Caco-2 (cell line): ENCODE measurements at regions of chr4 and their contacts with region 1.

Region 1: DNA sequence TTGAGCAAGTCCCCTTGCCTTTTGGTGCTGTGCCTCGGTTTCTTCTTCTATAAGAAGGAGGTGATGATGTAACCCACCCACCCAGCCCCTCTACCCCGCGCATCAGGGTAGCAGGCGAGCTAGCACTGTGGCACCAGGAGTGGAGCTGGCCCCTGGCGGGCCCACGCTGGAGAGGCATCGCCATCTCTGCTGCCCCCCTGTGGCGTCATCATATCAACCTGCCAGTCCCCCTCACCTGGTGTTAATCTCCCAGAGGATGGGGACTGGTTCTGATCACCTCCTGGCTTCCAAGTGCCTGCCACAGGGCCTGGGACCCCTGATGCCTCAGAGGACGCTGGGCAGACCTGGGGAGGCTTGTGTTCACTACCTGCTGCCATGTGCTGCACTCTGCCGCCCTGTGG is 6.3 kb upstream of the SORCS2 start:
- DNase-seq: peak in 1 of 2 experiments; percentile 62
- H3K4me3 ChIP-seq: no peak overlapping the region
- H3K4me3 Mint-ChIP-seq: no peak overlapping the region
- H3K27ac Mint-ChIP-seq: no peak overlapping the region
- H3K4me1 ChIP-seq: no peaks in the 10 kb centered on the region
- H3K4me1 Mint-ChIP-seq: no peaks in the 10 kb centered on the region
- H3K27me3 ChIP-seq: no peaks in the 10 kb centered on the region
- H3K27me3 Mint-ChIP-seq: peaks cover 8% of the 10 kb centered on the region
- CTCF ChIP-seq: peak; percentile 38 to 58

Region 2: GRCh38 chr4:7151668-7152227 is 34.3 kb before region 1 on chr4:
- CTCF ChIA-PET with region 1: interaction called, 8 read pairs
- POLR2A ChIA-PET with region 1: no interaction called
- intact Hi-C with region 1: loop called (anchors 5 kb)
- DNase-seq: no peak
- H3K4me3 ChIP-seq: no peak overlapping the region
- H3K4me3 Mint-ChIP-seq: no peak overlapping the region
- H3K27ac Mint-ChIP-seq: no peak overlapping the region
- H3K4me1 ChIP-seq: no peaks in the 10 kb centered on the region
- H3K4me1 Mint-ChIP-seq: no peaks in the 10 kb centered on the region
- H3K27me3 ChIP-seq: no peaks in the 10 kb centered on the region
- H3K27me3 Mint-ChIP-seq: no peaks in the 10 kb centered on the region
- CTCF ChIP-seq: no peak

Region 3: GRCh38 chr4:7169134-7169533 is 16.9 kb before region 1 on chr4:
- CTCF ChIA-PET with region 1: interaction called, 11 read pairs
- POLR2A ChIA-PET with region 1: no interaction called
- intact Hi-C with region 1: no loop called
- DNase-seq: peak in 1 of 2 experiments; percentile 7
- H3K4me3 ChIP-seq: no peak overlapping the region
- H3K4me3 Mint-ChIP-seq: no peak overlapping the region
- H3K27ac Mint-ChIP-seq: no peak overlapping the region
- H3K4me1 ChIP-seq: peaks cover 15% of the 10 kb centered on the region
- H3K4me1 Mint-ChIP-seq: no peaks in the 10 kb centered on the region
- H3K27me3 ChIP-seq: no peaks in the 10 kb centered on the region
- H3K27me3 Mint-ChIP-seq: no peaks in the 10 kb centered on the region
- CTCF ChIP-seq: no peak